ENCODE measurements at regions of chr6 and their contacts with region 1.

Region 1: DNA sequence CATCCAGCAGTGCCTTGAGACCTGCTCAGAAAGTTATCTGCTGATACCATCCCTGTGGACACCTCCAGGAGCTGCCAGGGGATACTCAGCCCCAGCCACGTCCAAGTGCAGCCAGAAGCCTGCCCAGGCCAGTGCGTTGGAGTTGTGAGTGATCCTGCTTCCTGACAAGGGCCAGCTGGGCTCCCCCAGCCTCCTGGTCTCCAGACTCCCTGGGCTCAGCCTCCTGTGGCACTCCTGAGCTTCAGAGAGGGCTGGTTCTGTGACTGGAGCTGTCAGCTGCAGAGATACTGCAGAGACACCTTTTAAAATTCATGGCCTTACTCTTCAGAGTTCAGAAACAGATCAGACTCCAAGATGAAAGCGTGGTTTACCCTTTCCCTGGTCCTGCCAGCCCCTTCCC is 515.9 kb downstream of the CD83 start:
- DNase-seq: no peak

Region 2: GRCh38 chr6:14524319-14524718 is 109.2 kb before region 1 on chr6:
- intact Hi-C with region 1: no loop called
- DNase-seq: no peak

Region 3: GRCh38 chr6:14693301-14694192 is 60.1 kb after region 1 on chr6:
- intact Hi-C with region 1: loop called in 1 of 2 experiments (anchors 2 kb)
- DNase-seq: no peak

Measured in posterior vena cava (tissue), 2 donors.